Natural killer cell (primary cell): ENCODE measurements at regions of chr1 and their contacts with region 1.

Region 1: GRCh38 chr1:11838349-11839272 is 9.0 kb downstream of the NPPA start:
- DNase-seq: peak; percentile 69 to 86
- ATAC-seq: peak; percentile 85 to 99 (median 95)
- H3K4me3 ChIP-seq: no peak overlapping the region
- H3K4me3 Mint-ChIP-seq: no peak overlapping the region
- H3K27ac ChIP-seq: no peak overlapping the region
- H3K27ac Mint-ChIP-seq: no peak overlapping the region
- H3K4me1 ChIP-seq: peaks cover 7% of the 10 kb centered on the region
- H3K4me1 Mint-ChIP-seq: peaks cover 5 to 11% of the 10 kb centered on the region in 2 donors
- H3K27me3 ChIP-seq: no peaks in the 10 kb centered on the region
- H3K27me3 Mint-ChIP-seq: no peaks in the 10 kb centered on the region
- CTCF ChIP-seq: peak; percentile 95

Region 2: DNA sequence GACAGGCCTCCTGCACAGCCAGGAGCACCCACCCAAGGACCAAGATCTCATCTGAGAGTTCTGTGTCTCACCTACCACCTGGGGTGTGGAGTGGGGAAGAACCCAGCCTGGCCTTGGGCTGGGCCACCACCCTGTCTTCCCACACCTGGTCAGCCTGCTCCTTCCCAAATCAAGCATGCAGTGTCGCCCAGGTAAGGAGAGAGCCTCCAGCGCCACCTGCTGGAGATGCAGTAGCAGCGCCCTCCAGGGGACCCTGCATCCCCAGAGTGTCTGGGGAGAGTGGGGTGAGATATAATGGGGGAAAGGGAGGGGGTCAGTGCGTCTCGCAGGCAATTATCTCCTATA is 55.3 kb after region 1 on chr1:
- intact Hi-C with region 1: loop called (anchors 1 kb)
- DNase-seq: peak; percentile 56 to 81
- ATAC-seq: peak; percentile 77 to 91 (median 86)
- H3K4me3 ChIP-seq: no peak overlapping the region
- H3K4me3 Mint-ChIP-seq: no peak overlapping the region
- H3K27ac ChIP-seq: no peak overlapping the region
- H3K27ac Mint-ChIP-seq: no peak overlapping the region
- H3K4me1 ChIP-seq: no peaks in the 10 kb centered on the region
- H3K4me1 Mint-ChIP-seq: peaks cover 0 to 5% of the 10 kb centered on the region in 2 donors
- H3K27me3 ChIP-seq: peaks cover 9% of the 10 kb centered on the region
- H3K27me3 Mint-ChIP-seq: peaks cover 9 to 13% of the 10 kb centered on the region in 2 donors
- CTCF ChIP-seq: peak; percentile 82

Region 3: GRCh38 chr1:11907275-11908094 is 68.9 kb after region 1 on chr1:
- intact Hi-C with region 1: loop called (anchors 1 kb)
- DNase-seq: peak; percentile 91 to 97
- ATAC-seq: peak; percentile 60 to 84 (median 70)
- H3K4me3 ChIP-seq: no peak overlapping the region
- H3K4me3 Mint-ChIP-seq: peak overlapping the region; percentile 98
- H3K27ac ChIP-seq: peak overlapping the region; percentile 88
- H3K27ac Mint-ChIP-seq: peak overlapping the region; percentile 99 to 100
- H3K4me1 ChIP-seq: peaks cover 20% of the 10 kb centered on the region
- H3K4me1 Mint-ChIP-seq: peaks cover 35 to 36% of the 10 kb centered on the region in 2 donors
- H3K27me3 ChIP-seq: no peaks in the 10 kb centered on the region
- H3K27me3 Mint-ChIP-seq: no peaks in the 10 kb centered on the region
- CTCF ChIP-seq: peak; percentile 81

Region 4: GRCh38 chr1:11967028-11967547 is 128.5 kb after region 1 on chr1:
- intact Hi-C with region 1: loop called (anchors 2 kb)
- DNase-seq: peak in 1 of 2 donors; percentile 46
- ATAC-seq: peak; percentile 39 to 74 (median 66)
- H3K4me3 ChIP-seq: no peak overlapping the region
- H3K4me3 Mint-ChIP-seq: no peak overlapping the region
- H3K27ac ChIP-seq: no peak overlapping the region
- H3K27ac Mint-ChIP-seq: peak overlapping the region in 1 of 2 donors; percentile 68
- H3K4me1 ChIP-seq: peaks cover 6% of the 10 kb centered on the region
- H3K4me1 Mint-ChIP-seq: peaks cover 0 to 17% of the 10 kb centered on the region in 2 donors
- H3K27me3 ChIP-seq: no peaks in the 10 kb centered on the region
- H3K27me3 Mint-ChIP-seq: no peaks in the 10 kb centered on the region
- CTCF ChIP-seq: no peak